SK-N-SH (cell line): ENCODE measurements at regions of chr5 and their contacts with region 1.

Region 1: GRCh38 chr5:140926443-140927227 is 536 bp downstream of the PCDHAC1 start:
- DNase-seq: peak; percentile 95
- H3K4me3 ChIP-seq: peak overlapping the region; percentile 54 to 62
- H3K27ac ChIP-seq: peak overlapping the region in 1 of 2 experiments; percentile 79; a peak in 2 of 4 replicates
- H3K4me1 ChIP-seq: peaks cover 0 to 7% of the 10 kb centered on the region in 2 experiments; a peak in 2 of 4 replicates
- H3K27me3 ChIP-seq: no peaks in the 10 kb centered on the region
- CTCF ChIP-seq: peak; percentile 70
- EP300 ChIP-seq: no peak
- RAD21 ChIP-seq: peak; percentile 79

Region 2: GRCh38 chr5:140647042-140647341 is 279.6 kb before region 1 on chr5:
- CTCF ChIA-PET with region 1: no interaction called
- POLR2A ChIA-PET with region 1: no interaction called
- DNase-seq: no peak
- H3K4me3 ChIP-seq: peak overlapping the region; percentile 88 to 89
- H3K27ac ChIP-seq: peak overlapping the region; percentile 72 to 77; a peak in 3 of 4 replicates
- H3K4me1 ChIP-seq: peaks cover 5 to 8% of the 10 kb centered on the region in 2 experiments; a peak in 2 of 4 replicates
- H3K27me3 ChIP-seq: no peaks in the 10 kb centered on the region
- CTCF ChIP-seq: no peak
- EP300 ChIP-seq: no peak
- RAD21 ChIP-seq: no peak

Region 3: GRCh38 chr5:140785905-140786686 is 140.5 kb before region 1 on chr5 and contains the start of gene PCDHA1:
- CTCF ChIA-PET with region 1: no interaction called
- POLR2A ChIA-PET with region 1: no interaction called
- DNase-seq: peak; percentile 36
- H3K4me3 ChIP-seq: peak within 1 kb of the TSS in 1 of 2 experiments; percentile 31; a peak in 2 of 4 replicates
- H3K27ac ChIP-seq: no peak within 1 kb of the TSS
- H3K4me1 ChIP-seq: no peaks in the 10 kb centered on the region
- H3K27me3 ChIP-seq: no peaks in the 10 kb centered on the region
- CTCF ChIP-seq: peak; percentile 29
- EP300 ChIP-seq: no peak
- RAD21 ChIP-seq: peak; percentile 47
- polyA plus RNA-seq, gene PCDHA1: 0.16 and 0.21 TPM in 2 replicates

Region 4: DNA sequence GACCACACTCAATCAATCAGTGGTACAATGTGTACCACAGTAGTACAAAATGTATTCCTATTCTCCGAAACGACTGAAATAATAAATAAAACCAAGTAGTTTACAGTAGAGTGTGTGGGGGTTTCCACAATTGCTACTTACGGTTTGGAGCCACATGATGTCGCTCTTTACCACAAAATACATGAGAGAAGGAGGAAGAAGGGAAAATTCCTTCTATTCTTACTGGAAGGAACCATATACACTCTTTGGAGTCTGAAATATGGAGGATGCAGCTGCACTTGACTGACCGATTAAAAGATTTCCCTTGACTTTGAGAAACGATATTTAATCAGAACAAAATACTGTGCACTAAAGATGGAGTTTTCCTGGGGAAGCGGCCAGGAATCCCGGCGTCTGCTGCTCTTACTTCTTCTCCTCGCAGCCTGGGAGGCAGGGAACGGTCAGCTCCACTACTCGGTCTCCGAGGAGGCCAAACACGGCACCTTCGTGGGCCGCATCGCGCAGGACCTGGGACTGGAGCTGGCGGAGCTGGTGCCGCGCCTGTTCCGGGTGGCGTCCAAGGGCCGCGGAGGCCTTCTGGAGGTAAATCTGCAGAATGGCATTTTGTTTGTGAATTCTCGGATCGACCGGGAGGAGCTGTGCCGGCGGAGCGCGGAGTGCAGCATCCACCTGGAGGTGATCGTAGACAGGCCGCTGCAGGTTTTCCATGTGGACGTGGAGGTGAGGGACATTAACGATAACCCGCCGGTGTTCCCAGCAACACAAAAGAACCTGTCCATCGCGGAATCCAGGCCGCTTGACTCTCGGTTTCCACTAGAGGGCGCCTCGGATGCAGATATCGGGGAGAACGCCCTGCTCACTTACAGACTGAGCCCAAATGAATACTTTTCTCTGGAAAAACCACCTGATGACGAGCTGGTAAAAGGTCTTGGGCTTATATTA is 119.5 kb before region 1 on chr5 and contains the start of gene PCDHA4:
- CTCF ChIA-PET with region 1: interaction called, 13 read pairs
- POLR2A ChIA-PET with region 1: interaction called, 3 read pairs
- DNase-seq: peak; percentile 65
- H3K4me3 ChIP-seq: peak within 1 kb of the TSS; percentile 63
- H3K27ac ChIP-seq: peak within 1 kb of the TSS in 1 of 2 experiments; percentile 77; a peak in 2 of 4 replicates
- H3K4me1 ChIP-seq: no peaks in the 10 kb centered on the region; a peak in 2 of 4 replicates
- H3K27me3 ChIP-seq: no peaks in the 10 kb centered on the region
- CTCF ChIP-seq: peak; percentile 63
- EP300 ChIP-seq: no peak
- RAD21 ChIP-seq: peak; percentile 69
- polyA plus RNA-seq, gene PCDHA4: 1.2 and 1.4 TPM in 2 replicates

Region 5: GRCh38 chr5:140916349-140916748 is 10.3 kb before region 1 on chr5:
- CTCF ChIA-PET with region 1: interaction called, 19 read pairs
- POLR2A ChIA-PET with region 1: no interaction called
- DNase-seq: no peak
- H3K4me3 ChIP-seq: no peak overlapping the region
- H3K27ac ChIP-seq: no peak overlapping the region
- H3K4me1 ChIP-seq: no peaks in the 10 kb centered on the region
- H3K27me3 ChIP-seq: no peaks in the 10 kb centered on the region
- CTCF ChIP-seq: no peak
- EP300 ChIP-seq: no peak
- RAD21 ChIP-seq: no peak

Region 6: DNA sequence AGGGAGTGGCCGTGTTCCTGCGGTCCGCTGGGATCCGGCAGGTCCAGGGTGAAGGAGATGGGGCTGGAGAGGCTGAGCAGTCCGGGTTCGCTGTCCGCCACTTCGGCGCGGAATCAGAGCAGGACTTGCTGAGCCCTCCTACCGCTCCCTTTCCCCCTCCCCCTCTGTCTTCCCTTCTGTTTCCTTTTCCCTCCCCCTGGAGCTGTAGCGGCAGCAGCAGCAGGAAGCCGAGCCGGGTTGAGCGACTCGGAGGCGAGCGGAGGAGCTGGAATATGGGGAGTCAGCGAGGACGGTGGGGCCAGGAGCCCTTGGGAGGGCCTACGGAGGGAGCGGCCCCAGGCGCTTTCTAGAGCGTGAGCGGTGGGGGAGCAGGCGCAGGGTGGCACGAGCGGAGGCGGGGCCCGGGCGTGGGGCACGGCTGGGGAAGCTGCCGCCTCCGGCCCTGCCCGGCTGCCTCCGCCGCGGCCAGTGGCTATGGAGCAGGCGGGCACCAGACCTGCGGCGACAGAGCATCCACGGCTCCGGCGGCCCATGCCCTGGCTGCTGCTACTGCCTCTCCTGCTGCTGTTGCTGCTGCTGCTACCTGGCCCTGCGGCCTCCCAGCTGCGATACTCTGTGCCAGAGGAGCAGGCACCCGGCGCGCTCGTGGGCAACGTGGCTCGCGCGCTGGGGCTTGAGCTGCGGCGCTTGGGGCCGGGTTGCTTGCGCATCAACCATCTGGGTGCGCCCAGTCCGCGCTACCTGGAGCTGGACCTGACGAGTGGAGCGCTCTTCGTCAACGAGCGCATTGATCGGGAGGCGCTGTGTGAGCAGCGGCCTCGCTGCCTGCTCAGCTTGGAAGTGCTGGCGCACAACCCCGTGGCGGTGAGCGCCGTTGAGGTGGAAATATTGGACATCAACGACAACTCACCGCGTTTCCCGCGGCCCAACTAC is 39.9 kb after region 1 on chr5 and contains the start of gene PCDHAC2:
- CTCF ChIA-PET with region 1: interaction called, 30 read pairs
- POLR2A ChIA-PET with region 1: interaction called, 19 read pairs
- DNase-seq: peak; percentile 83
- H3K4me3 ChIP-seq: peak within 1 kb of the TSS; percentile 64 to 75
- H3K27ac ChIP-seq: peak within 1 kb of the TSS in 1 of 2 experiments; percentile 94; a peak in 2 of 4 replicates
- H3K4me1 ChIP-seq: peaks cover 8 to 41% of the 10 kb centered on the region in 2 experiments; a peak in 3 of 4 replicates
- H3K27me3 ChIP-seq: no peaks in the 10 kb centered on the region
- CTCF ChIP-seq: no peak
- EP300 ChIP-seq: no peak
- RAD21 ChIP-seq: no peak
- polyA plus RNA-seq, gene PCDHAC2: 0.39 and 0.76 TPM in 2 replicates

Region 7: GRCh38 chr5:141001854-141002604 is 75.4 kb after region 1 on chr5:
- CTCF ChIA-PET with region 1: interaction called, 40 read pairs
- POLR2A ChIA-PET with region 1: interaction called, 14 read pairs
- DNase-seq: peak; percentile 77
- H3K4me3 ChIP-seq: peak overlapping the region; percentile 47 to 59
- H3K27ac ChIP-seq: peak overlapping the region in 1 of 2 experiments; percentile 100; a peak in 3 of 4 replicates
- H3K4me1 ChIP-seq: peaks cover 25 to 28% of the 10 kb centered on the region in 2 experiments; a peak in 3 of 4 replicates
- H3K27me3 ChIP-seq: no peaks in the 10 kb centered on the region
- CTCF ChIP-seq: no peak
- EP300 ChIP-seq: peak in 1 of 2 experiments; percentile 78; a peak in 2 of 4 replicates
- RAD21 ChIP-seq: peak; percentile 29; the same call in 1 of the 2 replicates

Region 8: DNA sequence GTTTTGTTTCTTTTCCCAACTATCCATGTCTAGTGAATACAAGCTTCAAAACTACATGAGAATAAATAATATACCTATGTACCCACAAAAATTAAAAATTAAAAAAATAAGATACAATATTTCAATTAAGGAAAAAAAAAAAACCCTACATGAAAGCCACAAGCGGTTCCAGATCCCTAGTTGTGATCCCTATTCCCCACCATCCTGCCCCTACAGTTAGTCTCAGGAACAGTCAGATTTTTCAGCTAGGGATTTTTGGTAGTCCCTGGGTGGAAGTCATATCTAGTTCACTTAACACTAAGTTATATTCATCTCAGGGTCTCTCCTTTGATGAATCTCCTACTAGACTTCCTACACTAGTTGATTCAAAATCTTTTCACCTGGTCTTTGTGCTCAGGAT is 106.0 kb after region 1 on chr5:
- CTCF ChIA-PET with region 1: interaction called, 194 read pairs
- POLR2A ChIA-PET with region 1: no interaction called
- DNase-seq: no peak
- H3K4me3 ChIP-seq: no peak overlapping the region
- H3K27ac ChIP-seq: no peak overlapping the region
- H3K4me1 ChIP-seq: no peaks in the 10 kb centered on the region
- H3K27me3 ChIP-seq: no peaks in the 10 kb centered on the region
- CTCF ChIP-seq: no peak
- EP300 ChIP-seq: no peak
- RAD21 ChIP-seq: no peak